Activated naive CD4-positive, alpha-beta T cell treated with anti-CD3 and anti-CD28 coated beads for 36 hours (primary cell): ENCODE measurements at regions of chr6 and their contacts with region 1.

Region 1: DNA sequence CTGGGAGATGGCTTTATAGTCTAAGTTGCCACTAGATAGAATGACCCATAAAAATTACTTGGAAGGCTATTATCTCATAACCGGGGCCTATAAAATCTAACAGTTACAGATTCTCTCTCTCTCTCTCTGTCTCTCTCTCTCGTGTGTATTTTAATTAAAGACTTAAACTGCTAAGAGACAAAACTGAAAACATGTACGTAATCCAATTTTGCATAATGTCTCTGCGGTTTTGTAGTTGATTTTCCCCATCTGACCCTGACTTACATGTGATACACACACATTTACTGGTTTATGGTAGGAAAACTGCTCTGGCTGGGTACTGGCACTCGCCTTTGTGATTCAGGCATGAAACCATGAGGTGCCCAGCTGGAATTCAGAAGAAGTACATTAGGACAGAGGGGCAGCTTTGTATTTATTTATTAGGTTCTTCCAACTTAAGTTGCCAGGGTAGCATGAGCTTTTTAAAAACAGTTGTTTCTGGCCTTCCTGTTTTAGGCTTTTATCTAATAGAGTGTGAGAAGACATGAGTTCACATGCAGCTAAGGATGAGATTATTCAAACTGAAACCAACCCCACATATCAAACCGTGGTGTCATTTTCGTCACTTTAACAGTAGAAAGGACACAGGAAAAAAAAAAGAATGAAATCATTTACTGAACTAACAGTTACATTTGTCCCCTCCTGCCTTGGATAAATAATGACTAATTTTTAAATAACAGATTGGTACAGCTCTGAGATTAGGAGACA is 182.5 kb downstream of the GMPR start:
- DNase-seq: peak; percentile 66
- H3K4me3 Mint-ChIP-seq: peak overlapping the region; percentile 45
- H3K27ac Mint-ChIP-seq: peak overlapping the region; percentile 95
- H3K4me1 Mint-ChIP-seq: peaks cover 42% of the 10 kb centered on the region
- H3K27me3 Mint-ChIP-seq: no peaks in the 10 kb centered on the region

Region 2: GRCh38 chr6:16437984-16438383 is 17.1 kb after region 1 on chr6:
- CTCF ChIA-PET with region 1: interaction called, 5 read pairs
- intact Hi-C with region 1: loop called (anchors 1 kb)
- DNase-seq: no peak
- H3K4me3 Mint-ChIP-seq: peak overlapping the region; percentile 78
- H3K27ac Mint-ChIP-seq: peak overlapping the region; percentile 89
- H3K4me1 Mint-ChIP-seq: peaks cover 65% of the 10 kb centered on the region
- H3K27me3 Mint-ChIP-seq: no peaks in the 10 kb centered on the region

Region 3: GRCh38 chr6:16481697-16482399 is 61.0 kb after region 1 on chr6:
- CTCF ChIA-PET with region 1: no interaction called
- intact Hi-C with region 1: loop called (anchors 1 kb)
- DNase-seq: peak; percentile 79
- H3K4me3 Mint-ChIP-seq: peak overlapping the region; percentile 32
- H3K27ac Mint-ChIP-seq: peak overlapping the region; percentile 75
- H3K4me1 Mint-ChIP-seq: peaks cover 70% of the 10 kb centered on the region
- H3K27me3 Mint-ChIP-seq: no peaks in the 10 kb centered on the region

Region 4: GRCh38 chr6:16657768-16658167 is 236.9 kb after region 1 on chr6:
- CTCF ChIA-PET with region 1: no interaction called
- intact Hi-C with region 1: loop called (anchors 1 kb)
- DNase-seq: peak; percentile 9
- H3K4me3 Mint-ChIP-seq: peak overlapping the region; percentile 2
- H3K27ac Mint-ChIP-seq: peak overlapping the region; percentile 32
- H3K4me1 Mint-ChIP-seq: peaks cover 43% of the 10 kb centered on the region
- H3K27me3 Mint-ChIP-seq: no peaks in the 10 kb centered on the region